ENCODE measurements at regions of chr5 and their contacts with region 1.

Region 1: GRCh38 chr5:151740336-151740942 is 18.0 kb downstream of the ATOX1 start:
- DNase-seq: peak; percentile 64
- H3K4me3 Mint-ChIP-seq: no peak overlapping the region
- H3K27ac Mint-ChIP-seq: no peak overlapping the region
- H3K4me1 Mint-ChIP-seq: peaks cover 15% of the 10 kb centered on the region
- H3K27me3 Mint-ChIP-seq: no peaks in the 10 kb centered on the region

Region 2: DNA sequence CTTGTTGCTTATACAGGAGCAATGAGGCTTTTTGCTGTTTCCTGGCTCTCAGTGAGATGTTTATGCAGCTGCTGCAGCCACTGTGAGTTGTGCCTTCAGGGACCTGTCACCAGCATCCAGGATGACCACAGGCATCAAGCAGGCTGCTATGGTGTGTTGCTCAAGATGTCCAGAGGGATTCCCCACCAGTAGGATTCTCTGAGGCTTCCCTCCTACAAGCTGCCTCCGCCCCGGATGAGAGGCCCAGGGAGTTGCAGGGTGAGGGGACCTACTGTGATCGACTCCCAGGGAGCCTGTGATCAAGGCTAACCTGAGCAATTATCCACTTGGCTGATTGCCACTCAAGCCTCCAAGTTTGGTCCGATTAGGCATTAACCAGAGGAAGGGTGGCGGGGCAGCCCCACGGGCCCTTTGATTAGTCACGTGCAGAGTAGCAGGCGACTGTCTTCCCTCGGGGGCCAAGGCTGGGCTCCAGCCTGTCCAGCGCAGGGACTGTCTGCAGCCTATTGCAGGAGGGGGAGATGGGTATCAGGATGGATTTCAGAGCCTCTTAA is 147.5 kb before region 1 on chr5:
- CTCF ChIA-PET with region 1: no interaction called
- intact Hi-C with region 1: no loop called
- DNase-seq: no peak
- H3K4me3 Mint-ChIP-seq: no peak overlapping the region
- H3K27ac Mint-ChIP-seq: no peak overlapping the region
- H3K4me1 Mint-ChIP-seq: no peaks in the 10 kb centered on the region
- H3K27me3 Mint-ChIP-seq: no peaks in the 10 kb centered on the region

Region 3: GRCh38 chr5:151651997-151652645 is 88.3 kb before region 1 on chr5:
- CTCF ChIA-PET with region 1: interaction called, 65 read pairs
- intact Hi-C with region 1: no loop called
- DNase-seq: peak; percentile 88
- H3K4me3 Mint-ChIP-seq: no peak overlapping the region
- H3K27ac Mint-ChIP-seq: no peak overlapping the region
- H3K4me1 Mint-ChIP-seq: no peaks in the 10 kb centered on the region
- H3K27me3 Mint-ChIP-seq: no peaks in the 10 kb centered on the region

Region 4: GRCh38 chr5:151659001-151659754 is 81.3 kb before region 1 on chr5:
- CTCF ChIA-PET with region 1: interaction called, 65 read pairs
- intact Hi-C with region 1: loop called (anchors 1 kb)
- DNase-seq: peak; percentile 87
- H3K4me3 Mint-ChIP-seq: no peak overlapping the region
- H3K27ac Mint-ChIP-seq: no peak overlapping the region
- H3K4me1 Mint-ChIP-seq: peaks cover 17% of the 10 kb centered on the region
- H3K27me3 Mint-ChIP-seq: no peaks in the 10 kb centered on the region

Region 5: GRCh38 chr5:151719228-151720000 is 21.0 kb before region 1 on chr5:
- CTCF ChIA-PET with region 1: interaction called, 10 read pairs
- intact Hi-C with region 1: loop called (anchors 2 kb)
- DNase-seq: peak; percentile 55
- H3K4me3 Mint-ChIP-seq: no peak overlapping the region
- H3K27ac Mint-ChIP-seq: no peak overlapping the region
- H3K4me1 Mint-ChIP-seq: peaks cover 12% of the 10 kb centered on the region
- H3K27me3 Mint-ChIP-seq: no peaks in the 10 kb centered on the region

Region 6: GRCh38 chr5:151751091-151751490 is 10.7 kb after region 1 on chr5:
- CTCF ChIA-PET with region 1: interaction called, 32 read pairs
- intact Hi-C with region 1: no loop called
- DNase-seq: no peak
- H3K4me3 Mint-ChIP-seq: no peak overlapping the region
- H3K27ac Mint-ChIP-seq: no peak overlapping the region
- H3K4me1 Mint-ChIP-seq: peaks cover 35% of the 10 kb centered on the region
- H3K27me3 Mint-ChIP-seq: no peaks in the 10 kb centered on the region

Region 7: GRCh38 chr5:151758430-151759241 is 18.2 kb after region 1 on chr5 and contains the start of gene ATOX1:
- CTCF ChIA-PET with region 1: interaction called, 12 read pairs
- intact Hi-C with region 1: no loop called
- DNase-seq: peak; percentile 91
- H3K4me3 Mint-ChIP-seq: peak within 1 kb of the TSS; percentile 81
- H3K27ac Mint-ChIP-seq: peak within 1 kb of the TSS; percentile 78
- H3K4me1 Mint-ChIP-seq: peaks cover 30% of the 10 kb centered on the region
- H3K27me3 Mint-ChIP-seq: no peaks in the 10 kb centered on the region
- total RNA-seq, gene ATOX1: 87.7 to 92.6 TPM